PC-9 (cell line): ENCODE measurements at regions of chr10 and their contacts with region 1.

Region 1: DNA sequence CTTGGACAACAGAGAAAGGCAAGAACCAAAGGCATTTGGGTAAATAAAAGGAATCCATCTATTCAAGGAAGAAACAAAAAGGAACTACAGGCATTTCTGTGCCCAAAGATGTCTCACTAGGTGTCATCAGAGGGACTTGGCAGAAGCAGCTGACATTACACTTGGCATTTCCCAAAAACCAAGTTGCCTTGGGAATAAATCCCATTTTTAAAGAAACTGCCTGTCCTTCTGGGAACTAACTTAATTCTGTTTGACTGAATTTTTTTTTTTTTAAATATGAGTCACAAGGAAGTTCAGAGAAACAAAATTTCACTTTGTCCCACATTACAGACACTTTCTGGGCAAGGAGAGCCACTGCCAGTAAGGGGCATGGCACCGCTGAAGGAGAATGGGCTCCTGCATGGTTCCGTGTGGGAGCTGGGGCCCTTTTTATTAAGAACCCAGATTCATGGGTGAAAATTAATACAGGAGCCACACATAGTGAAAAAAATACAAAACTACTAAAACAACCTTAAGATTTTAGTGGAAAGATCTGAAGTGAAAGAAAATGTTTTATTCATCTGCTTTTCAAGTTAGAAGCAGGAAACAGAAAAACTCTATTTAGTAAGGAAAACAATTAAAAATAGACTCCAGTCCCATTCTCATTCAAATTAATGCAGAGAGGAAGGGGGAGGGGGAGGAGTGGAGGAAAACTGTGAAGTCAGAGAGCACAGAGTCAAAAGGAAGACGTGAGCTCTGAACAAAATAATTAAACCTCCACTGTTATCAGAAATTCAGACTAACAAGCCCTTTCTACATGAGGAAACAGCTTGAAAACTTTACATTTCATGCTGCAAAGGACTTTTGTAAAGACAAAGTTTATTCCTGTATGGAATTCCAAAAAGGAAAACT is 118.4 kb upstream of the PDLIM1 start:
- DNase-seq: peak; percentile 23 to 82
- H3K4me3 ChIP-seq: peak overlapping the region; percentile 44; the same call in 1 of the 2 replicates
- H3K27ac ChIP-seq: peak overlapping the region; percentile 100
- H3K4me1 ChIP-seq: peaks cover 54% of the 10 kb centered on the region
- H3K27me3 ChIP-seq: no peaks in the 10 kb centered on the region
- CTCF ChIP-seq: no peak; the same call in 1 of the 2 replicates

Region 2: DNA sequence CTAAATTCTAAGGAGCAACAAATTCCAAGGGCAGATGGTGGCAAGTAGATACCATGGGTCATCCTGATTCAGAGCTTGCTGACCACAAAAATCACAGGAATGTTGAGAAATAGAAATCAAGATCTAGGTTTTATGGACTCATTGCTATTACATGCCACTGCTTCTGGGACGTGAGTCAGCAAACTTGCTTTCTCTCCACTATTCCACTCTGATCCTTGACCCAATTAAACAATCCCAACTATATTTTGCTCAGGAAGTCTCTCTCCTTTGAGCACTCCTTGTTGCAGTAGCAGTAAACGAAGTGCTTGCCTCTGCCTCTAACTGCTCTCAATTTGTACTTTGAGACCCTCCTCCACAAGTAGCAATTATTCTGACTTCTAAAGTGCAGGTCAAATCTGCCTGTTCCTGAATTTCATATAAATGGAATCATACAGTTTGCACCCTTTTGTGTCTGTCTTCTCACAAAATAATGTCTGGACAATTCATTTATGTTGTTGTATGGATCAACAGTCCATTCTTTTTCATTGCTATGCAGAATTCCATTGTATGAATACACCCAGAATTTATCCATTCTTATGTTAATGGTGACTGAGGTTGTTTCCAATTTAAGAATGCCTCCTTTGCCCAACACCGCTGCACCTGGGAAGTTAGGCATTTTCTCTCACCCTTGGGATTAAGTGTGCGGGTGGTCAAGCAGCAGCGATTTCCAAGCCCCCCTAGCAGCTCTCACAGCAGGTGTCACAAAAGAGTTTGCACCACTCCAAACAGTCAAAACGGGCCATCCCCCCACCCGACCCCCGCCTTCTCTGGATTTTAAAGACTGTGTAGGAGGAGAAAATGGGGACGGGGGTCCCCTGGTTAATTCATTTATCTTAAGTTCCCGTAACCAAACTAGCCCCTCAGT is 179.3 kb before region 1 on chr10:
- CTCF ChIA-PET with region 1: interaction called, 10 read pairs
- POLR2A ChIA-PET with region 1: no interaction called
- intact Hi-C with region 1: no loop called
- DNase-seq: peak; percentile 48 to 94
- H3K4me3 ChIP-seq: peak overlapping the region; percentile 33; the same call in 1 of the 2 replicates
- H3K27ac ChIP-seq: peak overlapping the region; percentile 98
- H3K4me1 ChIP-seq: peaks cover 47% of the 10 kb centered on the region
- H3K27me3 ChIP-seq: no peaks in the 10 kb centered on the region
- CTCF ChIP-seq: no peak

Region 3: DNA sequence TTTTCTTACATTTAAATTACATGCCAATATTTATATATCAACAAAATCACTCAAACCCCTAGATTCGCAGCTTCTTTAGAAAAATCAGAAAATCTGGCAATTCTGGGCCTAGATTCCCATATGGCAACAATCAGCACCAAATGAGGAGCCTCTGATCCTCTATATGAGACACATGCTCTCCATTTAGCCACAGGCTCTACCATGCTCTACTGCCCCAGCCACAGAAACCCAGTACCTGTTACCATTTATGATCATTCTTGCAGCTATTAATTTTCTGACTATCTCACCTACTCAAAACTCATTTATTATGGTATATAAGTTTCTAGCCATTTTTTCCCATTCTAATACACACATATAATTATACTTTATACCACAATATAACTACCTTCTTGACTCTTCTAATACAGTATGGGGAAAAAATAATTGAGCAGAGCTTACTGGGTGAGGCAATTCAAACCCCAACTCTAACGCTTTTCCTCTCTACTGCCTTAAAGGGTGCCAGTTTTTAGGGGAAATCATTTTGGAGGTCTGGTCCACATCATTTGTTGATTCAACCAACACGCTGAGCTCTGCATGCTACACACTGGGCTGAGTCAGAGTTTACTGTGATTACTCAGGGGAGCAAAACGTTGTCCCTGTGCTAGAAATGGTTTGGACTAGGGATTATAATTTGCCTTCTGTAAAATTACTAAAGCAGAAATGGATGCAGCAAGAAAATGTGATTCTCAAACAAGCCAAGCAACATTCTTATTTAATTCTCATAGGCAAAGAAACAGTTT is 130.0 kb before region 1 on chr10:
- CTCF ChIA-PET with region 1: no interaction called
- POLR2A ChIA-PET with region 1: no interaction called
- intact Hi-C with region 1: no loop called
- DNase-seq: no peak
- H3K4me3 ChIP-seq: no peak overlapping the region
- H3K27ac ChIP-seq: no peak overlapping the region
- H3K4me1 ChIP-seq: peaks cover 7% of the 10 kb centered on the region
- H3K27me3 ChIP-seq: no peaks in the 10 kb centered on the region
- CTCF ChIP-seq: no peak

Region 4: DNA sequence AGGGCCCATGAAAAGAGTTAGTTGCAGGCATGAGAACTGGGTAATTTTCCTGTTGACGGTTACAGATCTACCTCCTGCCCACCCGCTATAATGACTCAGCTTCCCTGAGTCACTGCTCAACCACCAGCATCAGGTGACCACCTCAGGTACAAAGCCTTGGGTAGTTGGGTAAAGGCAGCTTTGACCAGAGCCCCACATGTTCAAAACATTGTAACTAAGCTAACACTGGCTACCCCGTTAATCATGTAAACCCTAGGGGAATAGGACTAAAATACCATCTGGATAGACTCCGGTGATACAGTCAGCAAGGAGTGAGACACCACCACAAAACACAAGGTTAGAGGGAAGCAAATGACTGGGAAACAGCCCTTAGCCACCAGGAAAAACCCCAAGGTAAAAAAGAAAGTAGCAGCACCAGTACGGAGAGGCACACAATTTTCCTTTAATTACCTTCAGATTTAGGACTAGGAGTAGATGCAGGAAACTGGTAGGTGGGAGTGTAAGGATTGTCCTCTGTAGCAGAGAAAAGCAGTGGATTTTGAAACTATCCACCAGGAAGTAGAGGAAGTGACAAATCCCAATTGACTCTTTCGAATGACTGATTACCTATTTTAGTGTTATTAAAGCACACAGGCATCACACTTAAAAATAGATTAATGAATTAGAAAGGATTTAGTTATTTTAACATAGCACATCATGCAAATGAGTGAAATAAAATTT is 14.9 kb before region 1 on chr10:
- CTCF ChIA-PET with region 1: no interaction called
- POLR2A ChIA-PET with region 1: no interaction called
- intact Hi-C with region 1: loop called (anchors 1 kb)
- DNase-seq: peak; percentile 56 to 92
- H3K4me3 ChIP-seq: peak overlapping the region; percentile 47; the same call in 1 of the 2 replicates
- H3K27ac ChIP-seq: peak overlapping the region; percentile 99
- H3K4me1 ChIP-seq: peaks cover 64% of the 10 kb centered on the region
- H3K27me3 ChIP-seq: no peaks in the 10 kb centered on the region
- CTCF ChIP-seq: no peak

Region 5: GRCh38 chr10:95440756-95441546 is 31.7 kb after region 1 on chr10:
- CTCF ChIA-PET with region 1: no interaction called
- POLR2A ChIA-PET with region 1: no interaction called
- intact Hi-C with region 1: no loop called
- DNase-seq: no peak
- H3K4me3 ChIP-seq: no peak overlapping the region
- H3K27ac ChIP-seq: no peak overlapping the region
- H3K4me1 ChIP-seq: peaks cover 8% of the 10 kb centered on the region; the same call in 1 of the 2 replicates
- H3K27me3 ChIP-seq: no peaks in the 10 kb centered on the region
- CTCF ChIP-seq: no peak